Aorta (tissue), 5 donors: ENCODE measurements at regions of chr18 and their contacts with region 1.

Region 1: DNA sequence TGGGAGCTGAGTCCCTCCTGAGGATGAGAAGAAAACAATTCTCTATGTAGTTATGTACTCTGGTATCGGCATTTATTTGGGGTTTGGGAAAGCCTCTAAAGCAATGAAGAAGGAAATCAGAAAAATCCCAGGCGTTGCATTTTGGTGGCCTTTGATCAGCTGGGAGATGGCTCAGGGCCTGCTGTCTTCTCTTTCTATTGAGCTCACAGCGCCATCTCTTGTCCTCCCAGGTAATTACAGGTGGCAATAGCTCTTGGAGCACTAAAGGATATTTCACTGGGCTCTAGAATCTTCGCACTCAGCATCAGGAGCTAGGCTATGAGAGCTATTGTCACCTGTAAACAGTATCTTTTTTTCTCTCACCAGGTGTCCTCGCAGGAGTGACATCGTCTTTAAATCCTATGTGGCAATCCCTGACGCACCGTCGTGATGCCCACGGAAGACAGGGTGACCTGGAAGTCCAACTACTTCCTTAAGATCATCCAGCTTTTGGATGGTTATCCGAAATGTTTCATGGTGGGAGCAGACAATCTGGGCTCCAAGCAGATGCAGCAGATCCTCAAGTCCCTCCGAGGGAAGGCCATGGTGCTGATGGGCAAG is 76.1 kb upstream of the PMAIP1 start:
- DNase-seq: peak in 1 of 2 donors; percentile 51
- ATAC-seq: peak; percentile 74
- H3K4me3 ChIP-seq: no peak overlapping the region
- H3K27ac ChIP-seq: no peak overlapping the region
- H3K4me1 ChIP-seq: no peaks in the 10 kb centered on the region
- H3K27me3 ChIP-seq: no peaks in the 10 kb centered on the region

Region 2: GRCh38 chr18:59459369-59460079 is 364.2 kb before region 1 on chr18:
- intact Hi-C with region 1: loop called (anchors 2 kb)
- DNase-seq: no peak
- ATAC-seq: no peak
- H3K4me3 ChIP-seq: no peak overlapping the region
- H3K27ac ChIP-seq: no peak overlapping the region
- H3K4me1 ChIP-seq: no peaks in the 10 kb centered on the region
- H3K27me3 ChIP-seq: no peaks in the 10 kb centered on the region

Region 3: DNA sequence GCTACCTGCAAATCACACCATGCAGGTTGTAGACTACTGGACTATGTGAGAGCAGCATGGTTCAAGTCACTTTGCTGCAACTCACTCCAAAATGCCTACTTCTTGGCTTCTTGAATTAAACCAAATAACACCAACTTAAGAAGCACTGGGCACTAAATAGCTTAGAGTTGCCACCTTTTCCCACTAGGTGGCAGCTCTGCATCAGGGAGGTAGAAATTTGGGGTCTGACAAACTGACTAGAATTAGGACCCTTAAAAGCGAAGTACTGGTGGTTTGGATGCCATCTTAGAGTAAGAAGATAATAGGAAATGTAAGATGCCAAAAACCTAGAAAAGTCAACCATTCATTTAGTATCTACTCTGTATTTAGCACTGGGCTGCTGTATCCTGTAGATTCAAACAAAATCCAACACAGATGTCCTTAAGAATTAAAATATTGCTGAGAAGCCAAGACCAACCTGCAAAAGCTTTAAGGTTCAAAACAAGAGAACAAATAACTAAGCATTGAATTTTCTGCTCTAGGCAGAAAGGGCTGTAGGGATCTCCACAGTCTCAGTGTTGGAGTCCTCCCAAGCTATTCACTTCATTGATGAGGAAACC is 192.0 kb before region 1 on chr18:
- intact Hi-C with region 1: loop called in 1 of 2 experiments (anchors 5 kb)
- DNase-seq: no peak
- ATAC-seq: no peak
- H3K4me3 ChIP-seq: no peak overlapping the region
- H3K27ac ChIP-seq: no peak overlapping the region
- H3K4me1 ChIP-seq: no peaks in the 10 kb centered on the region
- H3K27me3 ChIP-seq: peaks cover 0 to 4% of the 10 kb centered on the region in 2 donors

Region 4: DNA sequence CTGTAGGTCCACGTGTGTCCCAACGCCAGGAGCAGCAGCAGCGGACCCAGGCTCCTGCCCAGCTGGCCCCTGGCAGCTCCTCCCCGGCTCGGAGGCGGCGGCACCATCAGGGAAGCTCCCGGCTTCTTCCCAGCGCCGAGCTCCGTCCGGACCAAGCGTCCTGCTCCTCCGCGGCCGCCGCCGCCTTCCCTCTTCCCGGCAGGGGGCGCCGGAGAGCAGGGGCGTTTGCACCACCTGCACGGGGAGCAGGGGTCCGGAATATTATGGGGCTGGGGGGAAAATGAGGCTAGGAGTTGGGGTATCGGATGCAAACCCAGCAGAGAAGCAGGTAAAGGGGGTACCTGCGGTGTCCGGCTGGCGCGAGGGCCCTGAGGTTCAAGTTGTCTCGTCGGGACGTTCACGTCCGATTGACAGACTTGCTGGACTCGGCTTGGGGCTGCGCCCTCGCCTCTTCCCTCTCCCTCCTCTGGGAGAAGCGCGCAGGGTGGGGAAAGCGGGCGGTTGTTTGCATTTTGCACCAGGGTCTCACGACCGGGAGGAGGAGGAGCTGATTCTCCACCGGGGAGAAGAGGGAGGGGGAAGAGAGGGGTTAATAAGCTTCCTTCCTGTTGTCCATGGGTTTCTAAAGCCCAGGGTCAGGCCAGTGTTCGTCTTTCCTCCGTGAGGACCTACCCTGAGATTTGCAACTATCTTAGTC is 126.3 kb before region 1 on chr18 and contains the start of gene CCBE1:
- intact Hi-C with region 1: loop called in 1 of 2 experiments (anchors 5 kb)
- DNase-seq: peak in 1 of 2 donors; percentile 79
- ATAC-seq: peak; percentile 64
- H3K4me3 ChIP-seq: no peak within 1 kb of the TSS
- H3K27ac ChIP-seq: no peak within 1 kb of the TSS
- H3K4me1 ChIP-seq: no peaks in the 10 kb centered on the region
- H3K27me3 ChIP-seq: no peaks in the 10 kb centered on the region
- total RNA-seq, gene CCBE1: 0.36 TPM in 1 of 2 donors, not detected in the other

Region 5: GRCh38 chr18:59897321-59897954 is 73.7 kb after region 1 on chr18:
- intact Hi-C with region 1: no loop called
- DNase-seq: no peak
- ATAC-seq: no peak
- H3K4me3 ChIP-seq: no peak overlapping the region
- H3K27ac ChIP-seq: no peak overlapping the region
- H3K4me1 ChIP-seq: no peaks in the 10 kb centered on the region
- H3K27me3 ChIP-seq: peaks cover 0 to 2% of the 10 kb centered on the region in 2 donors

Region 6: GRCh38 chr18:59918320-59918755 is 94.6 kb after region 1 on chr18:
- intact Hi-C with region 1: no loop called
- DNase-seq: no peak
- ATAC-seq: no peak
- H3K4me3 ChIP-seq: no peak overlapping the region
- H3K27ac ChIP-seq: no peak overlapping the region
- H3K4me1 ChIP-seq: no peaks in the 10 kb centered on the region
- H3K27me3 ChIP-seq: no peaks in the 10 kb centered on the region

Region 7: DNA sequence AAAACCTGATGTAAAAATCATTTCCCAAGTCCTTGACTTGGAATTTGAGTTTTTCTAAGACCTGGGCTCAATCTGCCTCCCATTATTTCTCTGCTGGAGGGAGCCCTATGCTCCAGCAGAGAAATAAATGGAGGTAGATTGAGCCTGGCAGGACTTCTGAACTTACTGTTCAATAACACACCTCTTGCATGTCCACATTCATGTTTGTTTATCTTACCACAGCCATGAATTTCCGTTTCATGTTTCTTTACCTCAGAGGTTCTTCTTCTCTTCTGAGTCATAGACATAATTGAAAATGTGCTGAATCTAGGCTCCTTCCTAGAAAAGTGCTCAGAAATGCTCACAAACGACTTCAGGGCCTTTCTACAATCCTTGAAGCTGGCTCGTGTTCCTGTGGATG is 246.9 kb after region 1 on chr18:
- intact Hi-C with region 1: no loop called
- DNase-seq: no peak
- ATAC-seq: no peak
- H3K4me3 ChIP-seq: no peak overlapping the region
- H3K27ac ChIP-seq: no peak overlapping the region
- H3K4me1 ChIP-seq: no peaks in the 10 kb centered on the region
- H3K27me3 ChIP-seq: no peaks in the 10 kb centered on the region

Region 8: GRCh38 chr18:60096428-60096827 is 272.7 kb after region 1 on chr18:
- intact Hi-C with region 1: no loop called
- DNase-seq: no peak
- ATAC-seq: no peak
- H3K4me3 ChIP-seq: no peak overlapping the region
- H3K27ac ChIP-seq: no peak overlapping the region
- H3K4me1 ChIP-seq: no peaks in the 10 kb centered on the region
- H3K27me3 ChIP-seq: no peaks in the 10 kb centered on the region